Calu3 (cell line): ENCODE measurements at regions of chrX and their contacts with region 1.

Region 1: GRCh38 chrX:43750248-43750676 is 94.2 kb downstream of the MAOA start:
- DNase-seq: peak; percentile 40
- H3K4me3 Mint-ChIP-seq: no peak overlapping the region
- H3K27ac Mint-ChIP-seq: no peak overlapping the region
- H3K4me1 Mint-ChIP-seq: no peaks in the 10 kb centered on the region
- H3K27me3 Mint-ChIP-seq: no peaks in the 10 kb centered on the region
- CTCF ChIP-seq: peak; percentile 35

Region 2: GRCh38 chrX:43349363-43349762 is 400.9 kb before region 1 on chrX:
- CTCF ChIA-PET with region 1: interaction called, 7 read pairs
- intact Hi-C with region 1: loop called (anchors 1 kb)
- DNase-seq: peak; percentile 46
- H3K4me3 Mint-ChIP-seq: no peak overlapping the region
- H3K27ac Mint-ChIP-seq: no peak overlapping the region
- H3K4me1 Mint-ChIP-seq: no peaks in the 10 kb centered on the region
- H3K27me3 Mint-ChIP-seq: peaks cover 13% of the 10 kb centered on the region
- CTCF ChIP-seq: peak; percentile 58

Region 3: DNA sequence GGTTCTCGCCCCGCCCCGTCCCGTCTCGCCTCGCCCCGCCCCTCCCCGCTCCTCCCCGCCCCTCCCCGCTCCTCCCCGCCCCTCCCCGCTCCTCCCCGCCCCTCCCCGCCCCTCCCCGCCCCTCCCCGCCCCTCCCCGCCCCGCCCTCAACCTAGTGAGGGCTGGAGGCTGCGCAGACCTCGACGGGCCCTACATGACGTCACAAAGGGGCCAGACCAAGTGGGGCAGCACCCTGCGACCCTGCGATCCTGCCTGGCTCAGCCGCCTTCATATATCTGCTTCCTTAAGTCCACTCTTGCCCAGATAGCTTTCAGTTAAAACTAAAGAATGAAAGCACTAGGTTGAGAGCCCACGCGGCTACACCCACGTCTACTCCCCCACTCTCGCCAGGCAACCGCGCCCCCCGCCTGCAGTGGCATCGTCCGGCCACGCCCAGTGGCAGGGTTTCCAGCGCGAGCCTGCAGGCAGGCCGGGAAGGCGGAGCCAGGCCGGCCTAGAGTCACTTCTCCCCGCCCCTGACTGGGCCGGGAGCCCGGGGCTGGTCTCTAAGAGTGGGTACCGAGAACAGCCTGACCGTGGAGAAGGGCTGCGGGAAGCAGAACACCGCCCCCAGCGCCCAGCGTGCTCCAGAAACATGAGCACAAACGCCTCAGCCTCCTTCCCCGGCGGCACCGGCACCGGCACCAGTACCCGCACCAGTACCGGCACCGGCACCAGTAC is 95.7 kb before region 1 on chrX:
- CTCF ChIA-PET with region 1: no interaction called
- intact Hi-C with region 1: loop called (anchors 5 kb)
- DNase-seq: peak; percentile 92
- H3K4me3 Mint-ChIP-seq: peak overlapping the region; percentile 71
- H3K27ac Mint-ChIP-seq: peak overlapping the region; percentile 93
- H3K4me1 Mint-ChIP-seq: peaks cover 8% of the 10 kb centered on the region
- H3K27me3 Mint-ChIP-seq: no peaks in the 10 kb centered on the region
- CTCF ChIP-seq: no peak

Region 4: DNA sequence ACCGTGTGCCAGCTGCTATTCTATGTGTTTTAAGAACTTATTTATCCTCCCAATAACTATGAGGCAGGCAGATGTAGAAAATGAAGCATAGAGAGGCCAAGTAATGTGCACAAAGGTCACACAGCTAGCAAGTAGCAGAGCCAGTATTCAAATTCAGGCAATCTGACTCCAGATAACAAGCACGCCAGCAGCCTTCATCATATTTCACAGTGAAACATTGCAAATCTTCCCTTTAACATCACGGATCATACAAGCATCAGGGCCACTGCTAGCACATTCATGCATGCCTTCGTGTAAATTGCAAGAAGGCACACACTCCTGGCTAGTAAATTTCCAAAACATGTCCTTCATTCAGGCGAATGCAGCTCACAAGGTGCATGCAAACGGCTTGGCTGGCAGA is 98.9 kb after region 1 on chrX:
- CTCF ChIA-PET with region 1: no interaction called
- intact Hi-C with region 1: no loop called
- DNase-seq: no peak
- H3K4me3 Mint-ChIP-seq: no peak overlapping the region
- H3K27ac Mint-ChIP-seq: no peak overlapping the region
- H3K4me1 Mint-ChIP-seq: peaks cover 16% of the 10 kb centered on the region
- H3K27me3 Mint-ChIP-seq: no peaks in the 10 kb centered on the region
- CTCF ChIP-seq: no peak

Region 5: DNA sequence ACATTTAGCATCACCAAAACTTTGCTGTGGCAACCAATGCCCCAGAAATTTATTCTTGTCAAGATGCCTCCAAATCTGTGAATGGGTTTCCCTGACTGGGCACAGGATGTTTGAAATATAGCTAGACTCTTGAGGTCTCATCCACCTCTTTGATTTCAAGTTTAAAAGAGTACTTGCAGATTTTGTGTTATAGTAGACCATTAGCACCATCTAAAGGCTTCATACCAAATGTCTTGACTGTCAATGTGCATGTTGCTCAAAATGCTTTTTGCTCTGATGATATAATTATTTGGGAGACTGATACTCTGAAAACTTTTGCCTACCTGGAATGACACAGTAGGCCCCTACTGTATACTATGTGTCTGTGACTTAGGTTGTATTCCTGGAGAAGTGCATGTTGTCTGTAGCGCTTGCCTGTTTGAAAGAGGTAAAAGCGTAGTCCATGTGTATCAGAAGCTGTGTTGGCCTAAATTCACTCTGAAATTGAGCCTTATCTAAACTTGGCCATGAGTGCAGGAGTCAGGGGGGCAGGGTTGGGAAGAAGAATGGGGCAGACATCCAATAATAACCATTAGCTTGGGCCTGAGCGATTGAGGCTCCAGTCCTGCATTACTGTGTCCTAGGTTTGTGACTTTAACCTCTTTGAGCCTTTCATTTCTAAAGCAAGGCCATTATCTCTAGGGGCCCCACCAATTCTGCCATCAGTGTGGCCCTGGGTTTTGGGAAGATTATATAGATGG is 189.1 kb after region 1 on chrX:
- CTCF ChIA-PET with region 1: interaction called, 3 read pairs
- intact Hi-C with region 1: loop called (anchors 5 kb)
- DNase-seq: no peak
- H3K4me3 Mint-ChIP-seq: no peak overlapping the region
- H3K27ac Mint-ChIP-seq: no peak overlapping the region
- H3K4me1 Mint-ChIP-seq: peaks cover 9% of the 10 kb centered on the region
- H3K27me3 Mint-ChIP-seq: no peaks in the 10 kb centered on the region
- CTCF ChIP-seq: no peak

Region 6: GRCh38 chrX:44265559-44265958 is 515.3 kb after region 1 on chrX:
- CTCF ChIA-PET with region 1: no interaction called
- intact Hi-C with region 1: no loop called
- DNase-seq: no peak
- H3K4me3 Mint-ChIP-seq: no peak overlapping the region
- H3K27ac Mint-ChIP-seq: no peak overlapping the region
- H3K4me1 Mint-ChIP-seq: no peaks in the 10 kb centered on the region
- H3K27me3 Mint-ChIP-seq: no peaks in the 10 kb centered on the region
- CTCF ChIP-seq: no peak